Esophagus muscularis mucosa (tissue), 4 donors: ENCODE measurements at regions of chr19 and their contacts with region 1.

Region 1: DNA sequence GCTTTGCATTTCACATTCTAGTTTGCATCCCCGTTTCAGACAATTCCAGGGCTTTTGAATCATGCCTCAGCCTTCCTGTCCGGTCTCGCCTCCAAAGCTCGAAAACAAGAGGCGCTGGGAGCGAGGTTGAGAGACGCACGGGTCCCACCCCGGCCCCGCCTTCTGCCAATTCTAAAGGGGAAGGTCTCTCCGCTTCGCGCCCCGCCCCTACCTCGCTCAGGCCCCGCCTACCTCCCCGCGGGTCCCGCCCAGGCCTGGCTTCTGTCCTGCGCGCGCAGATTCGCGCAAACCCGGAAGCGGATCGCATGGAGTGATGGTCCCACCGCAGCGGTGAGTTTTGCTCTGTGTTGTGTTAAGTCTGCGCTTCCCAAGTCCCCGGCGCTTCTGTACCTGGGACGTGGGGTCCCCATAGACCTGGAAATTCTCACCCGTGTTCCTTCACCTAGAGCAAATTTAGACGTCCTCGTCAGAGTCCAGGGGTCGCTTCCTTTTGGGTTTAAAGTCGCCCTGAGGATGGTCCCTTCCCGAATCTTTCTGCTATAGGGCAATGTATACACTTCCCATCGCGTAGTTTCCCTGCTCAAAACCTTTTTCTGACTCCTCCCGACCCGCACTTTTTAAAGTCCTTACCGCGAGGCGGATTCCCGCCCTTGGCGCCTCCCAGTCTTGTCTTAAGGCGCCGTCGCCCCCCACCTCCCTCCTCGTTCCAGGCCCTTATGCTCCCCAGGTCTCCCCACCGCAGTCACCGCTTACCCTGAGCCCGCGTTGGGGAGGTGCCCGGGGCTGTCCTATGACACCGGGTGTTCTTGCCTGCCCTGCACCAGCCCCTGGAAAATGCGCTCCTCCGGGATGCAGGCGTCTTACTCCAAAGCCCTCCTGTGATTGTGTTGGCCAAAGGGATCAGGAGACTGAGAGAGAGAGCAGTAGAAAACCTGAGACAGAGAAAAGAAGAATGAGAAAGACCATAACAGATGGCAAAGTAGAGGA is at the start of gene ZNF845:
- DNase-seq: peak; percentile 98
- H3K4me3 ChIP-seq: peak within 1 kb of the TSS; percentile 69 to 77 (median 70)
- H3K27ac ChIP-seq: peak within 1 kb of the TSS; percentile 73 to 85 (median 79)
- H3K4me1 ChIP-seq: peaks cover 7 to 20% (median 18%) of the 10 kb centered on the region in 4 donors
- H3K27me3 ChIP-seq: peaks cover 0 to 4% (median 0%) of the 10 kb centered on the region in 4 donors
- CTCF ChIP-seq: no peak
- EP300 ChIP-seq: no peak
- POLR2A ChIP-seq: no peak
- total RNA-seq, gene ZNF845: 4.4 to 6.2 (median 5.9) TPM

Region 2: DNA sequence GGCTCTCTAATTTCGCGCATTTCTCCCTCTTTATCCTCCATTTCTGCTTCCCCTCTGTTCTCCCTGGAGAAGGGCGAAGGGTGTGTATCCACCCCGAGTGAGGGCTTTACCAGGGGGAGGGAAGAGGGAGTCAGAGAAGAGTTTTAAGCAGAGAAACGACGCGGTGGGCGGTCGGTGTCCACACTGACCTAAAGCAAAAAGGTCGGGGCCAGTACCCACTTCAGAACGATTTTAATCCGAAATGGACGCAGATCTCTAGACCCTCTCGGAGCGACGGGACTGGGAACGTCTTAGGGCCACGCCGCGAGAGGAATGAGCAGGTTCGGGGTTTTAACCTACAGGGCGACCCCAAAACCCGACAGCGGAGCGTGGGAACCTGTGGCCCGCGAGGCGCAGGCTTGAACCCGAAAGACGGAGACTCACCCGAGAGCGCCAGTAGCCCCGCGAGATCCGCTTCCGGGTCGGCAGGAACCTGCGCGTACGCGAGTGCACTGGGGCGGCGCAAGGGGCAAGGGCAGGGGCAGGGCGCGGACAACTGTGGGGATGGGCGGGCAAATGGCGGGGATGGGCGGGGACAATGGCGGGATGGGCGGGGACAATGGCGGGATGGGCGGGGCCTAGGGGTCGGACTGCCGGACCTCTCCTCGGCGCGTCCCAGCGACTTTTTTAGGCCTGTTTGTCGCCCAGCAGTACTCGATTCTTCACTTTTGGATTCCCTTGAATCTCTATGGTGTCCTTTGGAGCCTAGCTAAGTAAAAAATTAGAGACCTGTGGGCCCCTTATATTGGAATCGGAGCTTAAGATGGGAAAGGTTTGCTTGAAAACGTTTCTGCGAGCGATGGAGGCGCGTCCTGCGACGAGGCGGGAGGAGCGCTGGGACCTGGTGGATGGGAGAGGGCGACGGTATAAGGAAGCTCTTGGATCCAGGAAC is 79.1 kb before region 1 on chr19 and contains the start of gene ZNF677:
- intact Hi-C with region 1: loop called (anchors 10 kb)
- DNase-seq: peak; percentile 96
- H3K4me3 ChIP-seq: peak within 1 kb of the TSS; percentile 67 to 92 (median 80)
- H3K27ac ChIP-seq: peak within 1 kb of the TSS; percentile 82 to 87 (median 84)
- H3K4me1 ChIP-seq: peaks cover 9 to 25% (median 13%) of the 10 kb centered on the region in 4 donors
- H3K27me3 ChIP-seq: no peaks in the 10 kb centered on the region
- CTCF ChIP-seq: no peak
- EP300 ChIP-seq: no peak
- POLR2A ChIP-seq: no peak
- total RNA-seq, gene ZNF677: 15.6 to 22.0 (median 17.1) TPM

Region 3: DNA sequence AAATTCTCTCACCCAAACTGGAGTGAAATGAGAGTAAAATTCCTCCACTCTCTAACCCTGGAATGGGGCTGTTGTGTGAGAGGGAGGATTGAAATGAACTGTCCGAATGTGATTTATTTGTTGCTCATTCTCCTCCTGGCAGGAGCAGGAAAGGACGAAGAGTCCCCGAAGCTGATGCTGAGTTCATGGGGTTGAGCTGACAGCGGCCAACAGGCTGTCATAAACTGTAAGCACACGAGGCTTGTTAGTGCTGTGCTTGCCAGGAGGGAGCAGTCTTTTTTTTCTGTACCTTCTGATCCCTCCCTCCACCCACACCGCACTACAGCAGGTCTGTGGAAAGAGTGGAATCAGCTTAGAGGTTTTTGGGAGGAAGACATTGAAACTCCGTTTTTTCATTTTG is 171.1 kb after region 1 on chr19:
- intact Hi-C with region 1: no loop called
- DNase-seq: no peak
- H3K4me3 ChIP-seq: peak overlapping the region; percentile 17 to 45 (median 36)
- H3K27ac ChIP-seq: peak overlapping the region; percentile 64 to 88 (median 74)
- H3K4me1 ChIP-seq: peaks cover 4 to 21% (median 6%) of the 10 kb centered on the region in 4 donors
- H3K27me3 ChIP-seq: no peaks in the 10 kb centered on the region
- CTCF ChIP-seq: no peak
- EP300 ChIP-seq: peak; percentile 82
- POLR2A ChIP-seq: no peak

Region 4: DNA sequence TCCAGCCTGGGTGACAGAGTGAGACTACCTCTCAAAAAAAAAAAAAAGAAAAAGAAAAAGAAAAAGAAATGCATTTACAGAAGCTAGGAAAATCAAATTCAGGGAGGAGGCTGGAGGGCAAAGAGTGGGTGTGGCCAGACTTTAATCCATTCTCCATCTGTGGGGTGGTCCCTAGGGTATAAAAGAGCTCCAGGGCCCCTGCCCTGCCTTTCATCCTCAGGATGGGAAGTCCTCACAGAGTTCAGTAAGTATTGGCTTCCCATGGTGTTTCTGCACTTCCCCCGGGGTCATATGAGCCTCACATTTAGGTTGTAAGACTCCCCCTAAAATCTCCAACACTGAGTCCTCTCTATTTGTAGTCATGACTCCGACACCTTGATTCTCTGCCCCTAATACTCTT is 331.0 kb after region 1 on chr19:
- intact Hi-C with region 1: no loop called
- DNase-seq: no peak
- H3K4me3 ChIP-seq: no peak overlapping the region
- H3K27ac ChIP-seq: no peak overlapping the region
- H3K4me1 ChIP-seq: no peaks in the 10 kb centered on the region
- H3K27me3 ChIP-seq: peaks cover 0 to 11% (median 0%) of the 10 kb centered on the region in 4 donors
- CTCF ChIP-seq: no peak
- EP300 ChIP-seq: no peak
- POLR2A ChIP-seq: no peak